ENCODE measurements at regions of chr3 and their contacts with region 1.

Region 1: DNA sequence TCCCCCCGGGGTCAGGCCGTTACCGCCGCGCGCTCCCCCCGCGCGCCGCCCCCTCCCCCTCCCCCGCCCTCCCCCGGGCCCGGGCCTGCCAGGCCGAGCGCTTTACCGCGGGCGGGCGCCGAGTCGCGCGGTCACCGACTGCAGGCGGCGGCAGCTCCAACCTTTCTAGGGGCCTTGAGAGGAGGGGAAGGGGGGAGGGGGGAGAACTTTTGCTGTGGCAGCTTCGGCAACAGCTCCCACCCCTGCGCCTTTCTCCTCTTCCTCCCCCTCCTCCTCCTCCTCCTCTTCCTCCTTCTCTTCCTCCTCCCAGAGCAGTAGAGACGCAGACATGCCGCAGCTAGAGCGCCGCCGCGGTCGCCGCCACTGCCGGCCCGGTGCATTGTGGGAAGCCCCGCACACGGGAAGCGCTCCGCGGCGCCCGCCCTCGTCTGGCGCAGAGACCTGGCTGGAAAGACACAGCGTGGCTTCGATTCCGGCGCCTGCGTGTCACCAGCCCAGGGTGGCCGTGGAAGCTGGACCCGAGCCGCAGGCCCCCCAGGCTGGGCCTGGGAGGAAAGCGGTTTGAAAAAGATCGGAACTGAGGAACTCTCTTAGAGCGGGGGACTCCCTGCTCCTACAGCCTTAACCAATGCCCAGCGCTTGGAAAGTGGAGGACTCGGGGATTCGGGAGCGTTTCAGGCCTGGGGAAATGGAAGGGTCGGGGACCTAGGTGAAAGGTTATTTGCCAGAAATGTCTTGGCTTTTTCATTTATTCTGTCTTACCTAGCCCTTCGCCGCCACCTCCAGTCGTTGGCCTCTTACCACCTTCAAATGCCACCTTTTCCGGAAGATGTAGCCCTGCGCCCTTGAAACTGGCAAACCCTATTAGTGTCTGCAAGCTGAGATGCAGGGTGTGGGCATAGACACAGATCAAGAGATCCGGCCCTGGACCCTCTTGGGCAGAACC is at the start of gene ZNF148:
- DNase-seq: peak; percentile 93 to 97 (median 95)
- ATAC-seq: peak; percentile 94 to 99 (median 99)
- H3K4me3 ChIP-seq: peak within 1 kb of the TSS; percentile 43 to 94 (median 84)
- H3K27ac ChIP-seq: peak within 1 kb of the TSS; percentile 80 to 97 (median 92)
- H3K4me1 ChIP-seq: peaks cover 0 to 35% (median 22%) of the 10 kb centered on the region in 12 donors
- H3K27me3 ChIP-seq: no peaks in the 10 kb centered on the region
- CTCF ChIP-seq: peak in 4 of 12 donors; percentile 9 to 37 (median 34)
- POLR2A ChIP-seq: peak in 1 of 2 donors; percentile 75
- total RNA-seq, gene ZNF148: 24.1 to 62.4 (median 40.2) TPM

Region 2: GRCh38 chr3:124409789-124410261 is 965.4 kb before region 1 on chr3:
- intact Hi-C with region 1: no loop called
- DNase-seq: no peak
- ATAC-seq: peak in 2 of 4 donors; percentile 62 to 70
- H3K4me3 ChIP-seq: no peak overlapping the region
- H3K27ac ChIP-seq: no peak overlapping the region
- H3K4me1 ChIP-seq: peaks cover 0 to 7% (median 0%) of the 10 kb centered on the region in 12 donors
- H3K27me3 ChIP-seq: no peaks in the 10 kb centered on the region
- CTCF ChIP-seq: no peak
- POLR2A ChIP-seq: no peak

Region 3: DNA sequence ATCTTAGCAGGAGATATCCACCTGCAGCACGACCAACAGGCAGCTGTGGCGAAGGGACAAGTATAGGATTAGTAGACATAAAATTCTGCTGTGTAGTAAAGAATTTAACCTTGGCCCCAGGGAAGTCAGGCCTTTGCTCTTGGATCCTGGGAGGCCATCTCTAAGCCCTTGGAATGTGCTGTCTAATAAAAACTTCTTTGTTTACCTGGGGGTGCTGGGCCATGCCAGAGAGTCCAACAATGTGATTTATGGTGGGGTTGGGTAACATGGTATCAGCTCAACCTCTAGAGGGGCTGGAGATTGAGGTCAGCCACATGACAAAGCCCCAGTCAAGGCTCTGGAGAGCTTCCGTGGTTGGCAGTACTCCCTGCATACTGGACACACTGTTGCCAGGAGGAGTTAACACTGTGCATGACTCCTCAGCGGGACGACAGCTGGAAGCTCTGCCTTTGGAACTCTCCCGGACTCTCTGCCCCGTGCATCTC is 371.9 kb before region 1 on chr3:
- intact Hi-C with region 1: loop called in 2 of 10 experiments (anchors 5 to 10 kb)
- DNase-seq: peak in 4 of 5 donors; percentile 58 to 82 (median 67)
- ATAC-seq: peak; percentile 91 to 94 (median 92)
- H3K4me3 ChIP-seq: no peak overlapping the region
- H3K27ac ChIP-seq: peak overlapping the region; percentile 28 to 77 (median 60)
- H3K4me1 ChIP-seq: peaks cover 7 to 73% (median 53%) of the 10 kb centered on the region in 12 donors
- H3K27me3 ChIP-seq: no peaks in the 10 kb centered on the region
- CTCF ChIP-seq: no peak
- POLR2A ChIP-seq: no peak

Region 4: DNA sequence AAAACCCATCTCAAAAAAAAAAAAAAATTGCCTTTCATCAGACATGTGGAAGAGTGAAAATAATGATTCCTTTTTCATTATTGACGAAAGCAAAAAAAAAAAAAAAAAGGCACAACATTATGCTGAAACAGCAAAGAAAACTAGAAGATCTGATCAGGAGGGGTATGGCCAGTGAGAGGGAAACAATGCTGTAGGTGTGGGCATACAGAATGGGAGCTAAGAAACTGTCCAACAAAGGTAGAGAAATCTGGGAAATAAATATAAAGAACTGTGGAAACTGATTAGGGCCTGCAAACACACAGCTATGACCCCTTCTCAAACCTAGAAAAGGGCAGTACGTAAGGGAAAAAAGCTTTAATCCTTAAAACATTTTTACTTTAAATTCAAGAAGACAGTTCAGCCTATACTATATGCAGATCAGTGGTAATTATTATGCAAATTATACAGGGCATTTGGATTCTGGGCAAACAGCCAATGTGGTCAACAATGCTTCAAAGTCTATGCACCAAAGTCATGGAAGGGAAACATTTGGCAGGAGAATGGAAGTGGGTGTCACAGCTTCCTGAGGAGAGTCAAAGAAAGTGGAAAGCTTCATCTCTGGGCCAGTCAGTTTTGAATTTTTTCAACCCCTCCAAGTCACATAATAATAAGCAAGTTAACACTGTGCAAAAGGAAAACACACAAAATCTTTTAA is 94.5 kb before region 1 on chr3:
- intact Hi-C with region 1: loop called in 1 of 10 experiments (anchors 10 kb)
- DNase-seq: peak in 3 of 5 donors; percentile 16 to 25 (median 20)
- ATAC-seq: peak in 1 of 4 donors; percentile 14
- H3K4me3 ChIP-seq: no peak overlapping the region
- H3K27ac ChIP-seq: no peak overlapping the region
- H3K4me1 ChIP-seq: peaks cover 0 to 12% (median 4%) of the 10 kb centered on the region in 12 donors
- H3K27me3 ChIP-seq: no peaks in the 10 kb centered on the region
- CTCF ChIP-seq: no peak
- POLR2A ChIP-seq: no peak

Region 5: DNA sequence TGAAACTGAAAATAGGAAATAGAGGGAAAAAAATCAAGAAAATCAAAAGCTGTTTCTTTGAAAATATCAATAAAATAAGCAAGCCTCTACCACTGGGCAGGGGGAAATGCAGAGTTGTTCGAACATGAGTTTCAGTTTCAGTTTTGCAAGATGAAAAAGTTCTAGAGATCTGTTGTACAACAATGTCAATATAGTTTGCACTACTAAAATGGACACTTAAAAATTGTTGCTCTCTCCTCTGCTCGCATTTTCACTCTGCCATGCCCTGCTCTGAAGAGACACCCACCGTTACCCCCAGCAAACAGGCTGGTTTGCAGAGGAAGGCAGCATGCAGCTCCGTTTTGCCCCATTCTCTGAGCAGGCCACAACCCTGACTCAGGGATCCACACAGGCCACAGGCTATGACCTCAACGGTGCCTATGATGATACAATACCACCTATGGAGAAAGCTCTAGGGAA is 64.6 kb before region 1 on chr3:
- intact Hi-C with region 1: loop called in 1 of 10 experiments (anchors 10 kb)
- DNase-seq: no peak
- ATAC-seq: peak in 3 of 4 donors; percentile 49 to 62 (median 53)
- H3K4me3 ChIP-seq: peak overlapping the region in 8 of 12 donors; percentile 15 to 47 (median 32)
- H3K27ac ChIP-seq: peak overlapping the region in 4 of 12 donors; percentile 2 to 50 (median 6)
- H3K4me1 ChIP-seq: peaks cover 0 to 26% (median 0%) of the 10 kb centered on the region in 12 donors
- H3K27me3 ChIP-seq: no peaks in the 10 kb centered on the region
- CTCF ChIP-seq: no peak
- POLR2A ChIP-seq: no peak

Region 6: DNA sequence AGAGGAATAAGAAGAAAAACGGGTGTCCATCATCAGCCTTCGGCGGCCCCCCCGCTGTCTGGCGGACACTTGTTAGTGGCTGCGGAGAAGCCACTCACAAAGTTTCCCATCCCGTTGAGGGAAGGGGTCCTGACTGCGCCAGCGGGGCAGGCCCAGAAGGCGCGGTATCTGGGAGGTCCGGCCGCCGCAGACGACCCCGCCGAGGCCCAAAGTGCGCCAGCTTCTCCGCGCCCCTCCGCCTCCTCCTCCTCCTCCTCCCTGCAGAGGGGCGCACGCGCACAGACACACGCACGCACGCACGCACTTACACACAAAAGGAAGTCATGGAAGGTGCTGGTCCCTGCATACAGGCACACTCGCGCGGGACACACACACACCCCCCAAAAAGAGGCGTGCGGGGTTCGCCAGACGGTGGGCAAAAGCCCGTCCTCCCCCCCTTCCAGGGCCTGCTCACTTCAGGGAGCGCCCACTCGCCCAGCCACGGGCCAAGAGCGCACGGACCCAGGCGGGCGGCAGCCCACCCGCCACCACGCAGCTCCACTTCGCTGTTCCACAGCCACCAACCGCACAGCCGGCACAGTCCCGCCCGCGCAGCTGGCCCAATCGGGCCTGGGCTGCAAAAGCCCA is 18.1 kb before region 1 on chr3:
- intact Hi-C with region 1: loop called in 1 of 10 experiments (anchors 2 kb)
- DNase-seq: peak; percentile 45 to 76 (median 59)
- ATAC-seq: peak; percentile 63 to 94 (median 92)
- H3K4me3 ChIP-seq: peak overlapping the region; percentile 30 to 73 (median 62)
- H3K27ac ChIP-seq: peak overlapping the region; percentile 35 to 88 (median 76)
- H3K4me1 ChIP-seq: peaks cover 0 to 67% (median 37%) of the 10 kb centered on the region in 12 donors
- H3K27me3 ChIP-seq: no peaks in the 10 kb centered on the region
- CTCF ChIP-seq: no peak
- POLR2A ChIP-seq: peak in 1 of 2 donors; percentile 51

Measured in heart left ventricle (tissue), 16 donors.